ENCODE measurements at regions of chr3 and their contacts with region 1.

Region 1: GRCh38 chr3:186152889-186153292 is 44.0 kb upstream of the ETV5 start:
- DNase-seq: peak; percentile 89
- H3K4me3 ChIP-seq: peak overlapping the region; percentile 45
- H3K27ac ChIP-seq: peak overlapping the region; percentile 88
- H3K4me1 ChIP-seq: peaks cover 47% of the 10 kb centered on the region
- CTCF ChIP-seq: no peak

Region 2: GRCh38 chr3:186209810-186210752 is 57.2 kb after region 1 on chr3:
- CTCF ChIA-PET with region 1: no interaction called
- POLR2A ChIA-PET with region 1: no interaction called
- intact Hi-C with region 1: loop called (anchors 5 kb)
- DNase-seq: peak; percentile 46
- H3K4me3 ChIP-seq: no peak overlapping the region
- H3K27ac ChIP-seq: no peak overlapping the region
- H3K4me1 ChIP-seq: peaks cover 23% of the 10 kb centered on the region
- CTCF ChIP-seq: no peak

Region 3: GRCh38 chr3:186241910-186242821 is 89.3 kb after region 1 on chr3:
- CTCF ChIA-PET with region 1: no interaction called
- POLR2A ChIA-PET with region 1: no interaction called
- intact Hi-C with region 1: loop called (anchors 5 kb)
- DNase-seq: peak; percentile 78
- H3K4me3 ChIP-seq: no peak overlapping the region
- H3K27ac ChIP-seq: no peak overlapping the region
- H3K4me1 ChIP-seq: peaks cover 16% of the 10 kb centered on the region
- CTCF ChIP-seq: peak; percentile 85